ENCODE measurements at regions of chr11 and their contacts with region 1.

Region 1: DNA sequence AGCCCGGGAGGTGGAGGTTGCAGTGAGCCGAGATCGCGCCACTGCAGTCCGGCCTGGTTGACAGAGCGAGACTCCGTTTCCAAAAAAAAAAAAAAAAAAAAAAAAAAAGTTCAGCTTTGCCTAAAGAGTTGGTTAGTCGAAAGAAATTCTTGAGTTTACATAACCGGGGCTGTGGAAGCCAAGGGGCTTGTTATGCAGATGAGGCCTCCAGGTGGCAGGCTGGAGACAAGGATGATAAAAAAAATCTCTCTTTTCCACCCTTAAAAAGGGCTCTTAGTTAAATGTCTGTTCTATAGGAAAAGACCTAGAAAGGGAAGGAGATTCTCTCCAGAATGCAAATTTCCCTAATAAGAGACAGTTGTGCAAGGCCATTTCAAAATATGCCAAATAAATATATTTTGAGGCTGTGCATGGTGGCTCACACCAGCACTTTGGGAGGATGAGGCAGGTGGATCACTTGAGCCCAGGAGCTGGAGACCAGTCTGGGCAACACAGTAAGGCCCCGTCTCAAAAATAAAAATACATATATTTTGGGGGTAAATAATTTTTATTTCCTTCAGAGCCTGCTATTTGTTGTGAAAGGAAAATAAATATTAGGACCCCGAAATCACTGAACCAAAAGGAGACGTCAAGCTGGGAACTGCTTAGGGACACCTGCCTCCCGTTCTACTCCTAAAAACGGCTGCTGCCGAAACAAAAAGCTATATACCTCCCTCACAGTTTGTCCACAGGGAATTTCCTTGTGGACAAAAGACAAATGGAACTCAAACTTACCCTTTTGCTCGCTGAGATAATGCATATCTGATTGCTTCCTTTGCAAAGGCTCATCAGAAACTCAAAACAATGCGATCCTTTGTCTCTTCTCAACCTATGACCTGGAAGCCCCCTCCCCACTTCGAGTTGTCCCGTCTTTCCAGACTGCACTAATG is 2.4 kb upstream of the IFITM2 start:
- DNase-seq: peak; percentile 66
- ATAC-seq: peak; percentile 13; the same call in 1 of the 2 replicates
- H3K4me3 ChIP-seq: no peak overlapping the region
- H3K27ac ChIP-seq: no peak overlapping the region
- H3K4me1 ChIP-seq: peaks cover 12% of the 10 kb centered on the region
- H3K27me3 ChIP-seq: no peaks in the 10 kb centered on the region
- CTCF ChIP-seq: peak; percentile 61

Region 2: DNA sequence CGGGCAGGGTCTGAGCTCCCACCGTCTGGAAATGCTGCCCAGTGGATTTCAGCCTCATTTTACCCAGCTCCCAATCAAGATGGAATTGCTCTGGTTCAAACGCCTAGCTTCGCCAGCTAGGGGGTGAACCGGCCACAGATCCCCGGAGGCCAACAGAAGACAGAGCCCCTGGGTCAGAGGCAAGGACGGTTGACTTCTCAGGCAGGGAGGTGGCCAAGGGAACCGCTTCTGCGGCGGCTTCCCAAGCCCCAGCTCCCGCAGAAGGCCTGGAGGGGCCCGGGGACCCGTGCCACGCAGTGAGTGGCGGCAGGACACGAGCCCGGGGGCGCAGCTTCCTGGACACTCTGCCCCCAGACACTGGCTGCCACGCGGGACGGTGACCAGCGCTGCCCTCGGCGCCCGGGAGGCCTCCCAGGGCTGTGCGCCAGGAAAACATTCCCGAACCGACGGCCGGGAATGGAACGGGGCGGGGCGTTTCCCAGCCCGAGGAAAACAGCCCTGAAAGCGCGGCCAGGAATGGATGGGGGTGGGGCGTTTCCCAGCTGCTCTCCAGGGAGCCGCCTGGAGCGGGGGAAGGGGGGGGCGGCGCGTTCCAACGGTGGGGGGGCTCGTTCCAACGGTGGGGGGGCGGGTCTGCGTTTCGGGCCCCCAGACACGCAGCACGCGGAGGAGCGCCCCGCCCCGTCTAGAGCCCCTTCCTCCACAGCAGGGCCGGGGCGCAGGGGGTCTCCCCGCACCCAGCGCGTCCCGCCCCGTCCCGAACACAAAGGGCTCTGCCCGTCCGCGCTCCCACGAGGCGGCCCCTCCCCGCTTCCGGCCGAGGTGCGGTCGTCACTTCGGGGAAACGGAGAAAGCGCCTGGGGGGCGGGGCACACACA is 50.6 kb after region 1 on chr11:
- CTCF ChIA-PET with region 1: interaction called, 3 read pairs
- POLR2A ChIA-PET with region 1: no interaction called
- intact Hi-C with region 1: loop called (anchors 5 kb)
- DNase-seq: peak; percentile 71
- ATAC-seq: peak; percentile 84
- H3K4me3 ChIP-seq: peak overlapping the region; percentile 58
- H3K27ac ChIP-seq: peak overlapping the region; percentile 34; the same call in 1 of the 2 replicates
- H3K4me1 ChIP-seq: peaks cover 9% of the 10 kb centered on the region
- H3K27me3 ChIP-seq: no peaks in the 10 kb centered on the region
- CTCF ChIP-seq: no peak

Region 3: DNA sequence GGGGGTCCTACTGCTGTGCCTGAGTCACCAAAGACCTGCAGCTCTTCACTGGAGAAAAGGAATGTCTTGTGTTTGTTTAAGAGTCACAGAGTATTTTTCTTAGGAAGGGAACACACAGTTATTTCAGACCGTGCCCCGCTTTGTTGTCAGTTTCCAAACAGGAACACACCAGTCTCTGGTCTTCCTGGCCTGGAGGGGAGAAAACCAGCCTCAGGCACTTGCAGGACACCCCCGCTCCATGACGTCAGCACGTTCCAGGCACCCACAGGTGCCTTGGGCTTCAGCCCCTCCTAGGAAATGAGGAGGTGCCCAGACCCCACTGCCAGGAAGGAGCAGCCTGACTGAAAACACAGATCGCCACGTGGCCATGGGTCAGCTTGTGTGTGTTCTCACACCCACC is 384.4 kb after region 1 on chr11:
- CTCF ChIA-PET with region 1: no interaction called
- POLR2A ChIA-PET with region 1: no interaction called
- intact Hi-C with region 1: no loop called
- DNase-seq: no peak
- ATAC-seq: no peak
- H3K4me3 ChIP-seq: no peak overlapping the region
- H3K27ac ChIP-seq: no peak overlapping the region
- H3K4me1 ChIP-seq: peaks cover 16% of the 10 kb centered on the region
- H3K27me3 ChIP-seq: no peaks in the 10 kb centered on the region
- CTCF ChIP-seq: no peak

Region 4: GRCh38 chr11:790721-791564 is 485.8 kb after region 1 on chr11:
- CTCF ChIA-PET with region 1: no interaction called
- POLR2A ChIA-PET with region 1: interaction called, 11 read pairs
- intact Hi-C with region 1: no loop called
- DNase-seq: no peak
- ATAC-seq: peak; percentile 31
- H3K4me3 ChIP-seq: no peak overlapping the region
- H3K27ac ChIP-seq: no peak overlapping the region
- H3K4me1 ChIP-seq: 0 out of 2 replicates have a peak, but pooled peaks cover 10% of the 10 kb centered on the region
- H3K27me3 ChIP-seq: no peaks in the 10 kb centered on the region
- CTCF ChIP-seq: no peak

Measured in PC-3 (cell line).